Activated CD4-positive, alpha-beta memory T cell treated with anti-CD3 and anti-CD28 coated beads for 36 hours (primary cell): ENCODE measurements at regions of chr12 and their contacts with region 1.

Region 1: GRCh38 chr12:130796985-130797686 is 41.9 kb downstream of the STX2 start:
- DNase-seq: peak; percentile 84
- H3K4me3 Mint-ChIP-seq: peak overlapping the region; percentile 48
- H3K27ac Mint-ChIP-seq: peak overlapping the region; percentile 87
- H3K4me1 Mint-ChIP-seq: peaks cover 29% of the 10 kb centered on the region
- H3K27me3 Mint-ChIP-seq: no peaks in the 10 kb centered on the region

Region 2: GRCh38 chr12:130506844-130507243 is 290.3 kb before region 1 on chr12:
- CTCF ChIA-PET with region 1: no interaction called
- POLR2A ChIA-PET with region 1: no interaction called
- intact Hi-C with region 1: no loop called
- DNase-seq: no peak
- H3K4me3 Mint-ChIP-seq: no peak overlapping the region
- H3K27ac Mint-ChIP-seq: no peak overlapping the region
- H3K4me1 Mint-ChIP-seq: no peaks in the 10 kb centered on the region
- H3K27me3 Mint-ChIP-seq: no peaks in the 10 kb centered on the region

Region 3: GRCh38 chr12:130761537-130762318 is 35.4 kb before region 1 on chr12:
- CTCF ChIA-PET with region 1: no interaction called
- POLR2A ChIA-PET with region 1: no interaction called
- intact Hi-C with region 1: loop called (anchors 1 kb)
- DNase-seq: peak; percentile 79
- H3K4me3 Mint-ChIP-seq: peak overlapping the region; percentile 66
- H3K27ac Mint-ChIP-seq: no peak overlapping the region
- H3K4me1 Mint-ChIP-seq: peaks cover 3% of the 10 kb centered on the region
- H3K27me3 Mint-ChIP-seq: peaks cover 4% of the 10 kb centered on the region

Region 4: DNA sequence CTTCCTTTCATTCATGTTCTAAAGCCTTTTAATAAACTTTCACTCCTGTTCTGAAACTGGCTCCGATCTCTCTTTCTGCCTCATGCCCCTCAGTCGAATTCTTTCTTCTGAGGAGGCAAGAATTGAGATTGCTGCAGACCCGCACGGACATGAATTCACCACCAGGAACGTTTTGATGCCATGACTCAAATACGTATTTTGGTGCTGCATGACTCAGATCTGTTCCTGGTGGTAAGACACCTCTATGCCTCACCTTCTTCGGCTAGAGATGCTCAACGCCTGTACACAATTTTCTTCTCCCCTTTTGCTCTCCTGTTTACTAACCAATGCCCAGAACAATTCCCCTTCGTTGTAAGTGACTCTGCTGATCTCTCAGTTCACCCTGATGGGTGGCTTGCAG is 29.0 kb before region 1 on chr12:
- CTCF ChIA-PET with region 1: no interaction called
- POLR2A ChIA-PET with region 1: no interaction called
- intact Hi-C with region 1: loop called (anchors 1 kb)
- DNase-seq: peak; percentile 58
- H3K4me3 Mint-ChIP-seq: no peak overlapping the region
- H3K27ac Mint-ChIP-seq: no peak overlapping the region
- H3K4me1 Mint-ChIP-seq: peaks cover 5% of the 10 kb centered on the region
- H3K27me3 Mint-ChIP-seq: peaks cover 4% of the 10 kb centered on the region

Region 5: DNA sequence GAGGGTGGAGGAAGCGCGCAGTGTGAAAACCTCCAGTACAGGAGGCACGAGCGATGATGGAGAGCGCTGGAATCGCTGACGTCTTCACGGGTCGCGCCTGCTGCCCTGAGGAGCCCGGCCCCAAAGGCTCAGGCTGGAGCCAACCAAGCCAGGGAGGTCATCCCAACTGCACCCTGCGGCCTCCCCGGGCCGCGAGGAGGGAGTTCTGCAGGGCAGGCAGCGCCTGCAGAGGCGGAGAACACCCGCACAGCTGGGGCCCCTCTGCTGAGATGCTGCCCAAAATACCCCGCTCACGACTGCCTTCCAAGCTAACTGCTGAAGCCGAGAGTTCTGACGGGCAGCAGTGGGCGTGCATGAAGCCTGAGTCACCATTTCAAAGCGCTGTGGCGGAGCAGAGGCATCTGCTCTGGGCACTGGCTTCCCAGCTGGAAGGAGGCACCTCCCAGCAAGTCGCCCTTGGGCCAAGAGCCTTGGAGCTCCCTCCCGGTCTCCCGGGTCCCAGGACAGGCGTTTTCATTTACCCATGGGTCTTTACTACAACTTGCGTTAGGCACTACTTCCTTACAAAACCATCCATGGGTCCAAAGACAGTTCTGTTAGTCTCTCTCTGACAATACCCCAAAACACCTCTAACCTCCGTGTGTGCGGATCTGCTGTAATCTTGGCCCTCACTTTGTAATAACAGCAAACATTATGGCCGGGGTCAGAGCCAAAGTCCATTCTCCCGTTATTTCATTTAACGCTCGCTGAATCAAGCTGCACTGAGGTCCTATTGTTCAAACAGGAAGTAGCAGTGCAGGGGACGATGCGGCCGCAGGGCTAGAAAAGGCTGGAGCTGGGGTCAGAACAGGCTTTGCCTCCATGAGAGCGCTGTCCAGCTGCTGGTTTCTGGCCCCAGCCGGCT is 20.9 kb before region 1 on chr12:
- CTCF ChIA-PET with region 1: interaction called, 4 read pairs
- POLR2A ChIA-PET with region 1: interaction called, 5 read pairs
- intact Hi-C with region 1: loop called (anchors 2 kb)
- DNase-seq: peak; percentile 86
- H3K4me3 Mint-ChIP-seq: peak overlapping the region; percentile 50
- H3K27ac Mint-ChIP-seq: no peak overlapping the region
- H3K4me1 Mint-ChIP-seq: peaks cover 15% of the 10 kb centered on the region
- H3K27me3 Mint-ChIP-seq: peaks cover 14% of the 10 kb centered on the region

Region 6: GRCh38 chr12:130818635-130819576 is 21.8 kb after region 1 on chr12:
- CTCF ChIA-PET with region 1: interaction called, 7 read pairs
- POLR2A ChIA-PET with region 1: no interaction called
- intact Hi-C with region 1: loop called (anchors 1 kb)
- DNase-seq: peak; percentile 81
- H3K4me3 Mint-ChIP-seq: peak overlapping the region; percentile 81
- H3K27ac Mint-ChIP-seq: peak overlapping the region; percentile 74
- H3K4me1 Mint-ChIP-seq: peaks cover 7% of the 10 kb centered on the region
- H3K27me3 Mint-ChIP-seq: no peaks in the 10 kb centered on the region

Region 7: GRCh38 chr12:130838951-130839769 is 42.0 kb after region 1 on chr12 and contains the start of gene STX2:
- CTCF ChIA-PET with region 1: no interaction called
- POLR2A ChIA-PET with region 1: no interaction called
- intact Hi-C with region 1: loop called (anchors 2 kb)
- DNase-seq: peak; percentile 92
- H3K4me3 Mint-ChIP-seq: peak within 1 kb of the TSS; percentile 79
- H3K27ac Mint-ChIP-seq: peak within 1 kb of the TSS; percentile 46
- H3K4me1 Mint-ChIP-seq: peaks cover 35% of the 10 kb centered on the region
- H3K27me3 Mint-ChIP-seq: no peaks in the 10 kb centered on the region
- total RNA-seq, gene STX2: 18.1 to 22.8 TPM